Panc1 (cell line): ENCODE measurements at regions of chr6 and their contacts with region 1.

Region 1: DNA sequence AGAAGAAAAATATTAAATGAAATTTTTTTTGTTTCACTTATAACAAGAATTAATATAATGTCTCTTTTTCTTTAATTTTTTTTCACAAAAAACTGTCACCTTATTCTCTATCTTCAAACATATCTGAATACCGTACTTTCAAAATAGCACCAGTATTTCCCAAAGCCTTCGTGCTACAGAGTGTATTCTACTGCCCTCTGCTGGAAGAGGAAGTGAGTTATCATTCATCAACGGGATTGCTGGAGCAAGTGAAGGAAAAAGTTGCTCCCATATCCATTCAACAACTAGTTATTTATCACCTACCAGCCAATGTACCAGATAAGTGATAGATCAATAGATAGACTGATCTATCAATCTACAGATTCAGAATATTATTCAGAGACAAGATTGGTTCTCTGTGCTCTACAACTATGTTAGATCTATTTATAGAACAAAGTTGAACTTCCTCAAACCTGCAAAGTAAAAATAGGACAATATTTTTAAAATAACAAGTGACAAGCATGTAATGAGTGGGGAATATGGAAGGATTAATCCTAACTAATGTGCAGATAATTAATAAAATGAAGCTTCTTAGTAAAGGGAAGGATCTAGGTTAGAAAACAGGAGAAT is 26.7 kb upstream of the TFAP2B start:
- DNase-seq: peak; percentile 28
- ATAC-seq: peak; percentile 74; the same call in 1 of the 2 replicates
- H3K4me3 ChIP-seq: no peak overlapping the region
- H3K27ac ChIP-seq: no peak overlapping the region
- H3K4me1 ChIP-seq: no peaks in the 10 kb centered on the region
- H3K27me3 ChIP-seq: no peaks in the 10 kb centered on the region
- CTCF ChIP-seq: peak; percentile 77; the same call in 1 of the 2 replicates

Region 2: GRCh38 chr6:50128420-50129005 is 663.5 kb before region 1 on chr6:
- CTCF ChIA-PET with region 1: interaction called, 3 read pairs
- POLR2A ChIA-PET with region 1: no interaction called
- in situ Hi-C with region 1: no loop called
- intact Hi-C with region 1: loop called (anchors 2 kb)
- DNase-seq: no peak
- ATAC-seq: no peak
- H3K4me3 ChIP-seq: no peak overlapping the region
- H3K27ac ChIP-seq: no peak overlapping the region
- H3K4me1 ChIP-seq: no peaks in the 10 kb centered on the region
- H3K27me3 ChIP-seq: no peaks in the 10 kb centered on the region; the same call in 1 of the 2 replicates
- CTCF ChIP-seq: no peak

Region 3: DNA sequence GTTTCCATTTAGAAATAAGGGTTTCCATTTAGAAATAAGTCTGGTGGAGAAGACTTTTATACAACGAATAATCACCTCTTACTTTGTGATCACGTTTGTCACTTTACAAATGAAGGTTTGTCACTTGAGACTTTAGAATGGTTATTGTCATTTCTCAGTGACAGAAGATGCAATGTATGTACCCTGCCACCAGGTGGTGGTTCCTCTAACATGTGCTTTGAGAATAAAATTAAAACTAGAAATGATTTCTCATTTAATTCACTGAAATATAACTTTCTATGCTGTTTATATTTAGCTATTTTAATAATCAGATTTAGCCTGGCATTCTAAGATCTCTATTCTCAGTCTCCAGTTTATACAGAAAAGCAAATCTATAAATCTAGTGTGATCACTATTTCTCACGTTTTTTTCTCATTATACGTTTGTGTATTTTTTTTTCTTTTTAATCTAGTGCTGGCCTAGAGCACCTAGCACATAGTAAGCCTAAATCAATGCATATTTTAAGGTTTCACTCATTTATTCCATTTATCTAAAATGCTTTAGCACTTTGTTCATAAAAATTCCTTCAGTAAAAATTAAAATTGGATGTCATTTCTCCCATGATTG is 136.1 kb before region 1 on chr6:
- CTCF ChIA-PET with region 1: no interaction called
- POLR2A ChIA-PET with region 1: no interaction called
- in situ Hi-C with region 1: no loop called
- intact Hi-C with region 1: loop called (anchors 5 kb)
- DNase-seq: no peak
- ATAC-seq: no peak
- H3K4me3 ChIP-seq: no peak overlapping the region
- H3K27ac ChIP-seq: no peak overlapping the region
- H3K4me1 ChIP-seq: no peaks in the 10 kb centered on the region
- H3K27me3 ChIP-seq: no peaks in the 10 kb centered on the region
- CTCF ChIP-seq: peak; percentile 63; the same call in 1 of the 2 replicates

Region 4: GRCh38 chr6:50899306-50899870 is 107.4 kb after region 1 on chr6:
- CTCF ChIA-PET with region 1: no interaction called
- POLR2A ChIA-PET with region 1: no interaction called
- in situ Hi-C with region 1: no loop called
- intact Hi-C with region 1: no loop called
- DNase-seq: no peak
- ATAC-seq: no peak
- H3K4me3 ChIP-seq: no peak overlapping the region
- H3K27ac ChIP-seq: no peak overlapping the region
- H3K4me1 ChIP-seq: no peaks in the 10 kb centered on the region
- H3K27me3 ChIP-seq: no peaks in the 10 kb centered on the region
- CTCF ChIP-seq: no peak